HepG2 (cell line): ENCODE measurements at regions of chr5 and their contacts with region 1.

Region 1: DNA sequence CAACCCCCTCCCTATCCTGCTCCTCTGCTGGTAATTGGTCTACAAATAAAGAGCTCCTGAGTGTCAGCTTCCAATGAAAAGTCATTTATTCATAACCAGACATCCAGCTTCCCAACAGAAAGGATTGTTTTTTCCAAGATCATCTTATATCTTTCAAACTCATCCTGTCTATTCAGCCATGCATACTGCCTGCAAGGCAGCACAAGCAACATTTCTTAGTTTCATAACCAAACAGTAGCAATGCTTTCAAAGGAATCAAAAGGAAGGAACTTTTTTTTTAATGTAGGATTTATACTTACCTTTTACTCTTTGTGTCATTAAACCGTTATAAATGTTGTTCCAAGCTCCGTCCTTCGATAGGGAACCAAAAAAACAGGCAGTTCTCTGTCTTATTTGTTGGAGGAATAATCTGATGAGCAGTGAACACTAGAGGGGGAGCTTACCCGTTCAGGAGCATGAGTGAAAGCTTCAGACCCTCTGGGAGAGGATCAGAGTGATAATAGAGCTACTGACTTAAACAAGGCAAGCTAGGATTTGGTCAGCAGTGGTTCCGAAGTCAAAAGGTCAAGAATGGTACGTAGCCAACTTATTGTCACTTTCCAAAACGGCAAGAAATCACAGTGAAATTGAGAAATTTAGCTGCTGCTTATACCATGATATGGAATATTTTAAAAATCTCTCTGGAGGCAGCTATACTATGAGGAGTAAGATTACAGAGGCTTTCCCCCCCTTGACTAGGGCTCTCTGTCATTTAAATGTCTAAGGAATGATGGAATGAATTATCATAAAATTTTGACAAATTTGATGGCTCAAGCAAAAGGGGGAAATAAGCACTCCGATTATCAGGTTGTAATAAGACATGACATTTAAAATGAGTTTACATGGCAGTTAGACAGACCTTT is 892.9 kb downstream of the NR2F1-AS1 start:
- DNase-seq: peak; percentile 43
- ATAC-seq: peak; percentile 90
- H3K4me3 ChIP-seq: no peak overlapping the region
- H3K27ac ChIP-seq: no peak overlapping the region
- H3K4me1 ChIP-seq: no peaks in the 10 kb centered on the region
- H3K27me3 ChIP-seq: no peaks in the 10 kb centered on the region
- CTCF ChIP-seq: peak; percentile 65
- EP300 ChIP-seq: no peak
- POLR2A ChIP-seq: no peak
- RAD21 ChIP-seq: no peak

Region 2: GRCh38 chr5:93800988-93801811 is 1113.1 kb after region 1 on chr5:
- CTCF ChIA-PET with region 1: no interaction called
- POLR2A ChIA-PET with region 1: no interaction called
- in situ Hi-C with region 1: no loop called
- intact Hi-C with region 1: loop called (anchors 10 kb)
- DNase-seq: peak; percentile 45
- ATAC-seq: peak; percentile 54
- H3K4me3 ChIP-seq: no peak overlapping the region
- H3K27ac ChIP-seq: no peak overlapping the region
- H3K4me1 ChIP-seq: peaks cover 5% of the 10 kb centered on the region
- H3K27me3 ChIP-seq: no peaks in the 10 kb centered on the region
- CTCF ChIP-seq: peak; percentile 61
- EP300 ChIP-seq: no peak
- POLR2A ChIP-seq: no peak
- RAD21 ChIP-seq: peak; percentile 37; the same call in 1 of the 2 replicates